Ovary (tissue), 10 donors: ENCODE measurements at regions of chr14 and their contacts with region 1.

Region 1: GRCh38 chr14:92323011-92323915 is at the start of gene SLC24A4:
- DNase-seq: peak in 2 of 5 donors; percentile 9 to 20
- H3K4me3 ChIP-seq: peak within 1 kb of the TSS; percentile 20
- H3K27ac ChIP-seq: no peak within 1 kb of the TSS
- H3K4me1 ChIP-seq: no peaks in the 10 kb centered on the region
- H3K27me3 ChIP-seq: no peaks in the 10 kb centered on the region
- CTCF ChIP-seq: no peak
- EP300 ChIP-seq: no peak
- POLR2A ChIP-seq: no peak
- total RNA-seq, gene SLC24A4: 0.11 to 0.61 (median 0.24) TPM

Region 2: GRCh38 chr14:91693346-91693745 is 629.9 kb before region 1 on chr14:
- intact Hi-C with region 1: no loop called
- DNase-seq: no peak
- H3K4me3 ChIP-seq: no peak overlapping the region
- H3K27ac ChIP-seq: no peak overlapping the region
- H3K4me1 ChIP-seq: no peaks in the 10 kb centered on the region
- H3K27me3 ChIP-seq: no peaks in the 10 kb centered on the region
- CTCF ChIP-seq: no peak
- EP300 ChIP-seq: no peak
- POLR2A ChIP-seq: no peak

Region 3: DNA sequence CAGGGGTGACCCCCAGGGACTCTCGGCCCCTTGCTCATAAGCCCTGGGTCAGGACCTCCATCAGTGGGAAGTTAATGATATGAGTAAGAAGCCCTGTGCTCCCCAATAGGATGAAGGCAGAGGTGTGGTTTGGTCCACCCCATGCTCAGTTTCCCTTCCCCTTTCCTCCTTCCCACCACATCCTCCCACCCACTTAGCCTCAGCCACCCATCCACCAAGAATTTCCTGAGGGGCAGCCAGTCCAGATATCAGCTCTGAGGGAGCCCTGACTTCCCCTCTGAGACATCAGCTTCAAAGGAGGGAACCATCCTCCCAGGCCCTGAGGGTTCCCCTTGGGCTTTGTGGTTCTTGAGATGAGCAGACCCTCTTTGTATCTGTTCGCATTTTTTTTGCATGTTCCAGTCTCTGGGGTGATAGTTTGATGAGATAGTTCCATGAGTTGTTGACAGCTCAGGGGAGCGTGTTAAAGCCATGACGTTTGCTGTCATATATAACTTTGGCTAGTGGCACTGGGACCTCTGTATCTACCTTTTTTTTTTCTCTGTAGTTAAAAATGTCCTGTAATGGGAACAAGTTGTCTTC is 353.9 kb after region 1 on chr14:
- intact Hi-C with region 1: loop called in 1 of 4 experiments (anchors 10 kb)
- DNase-seq: peak in 1 of 5 donors; percentile 6
- H3K4me3 ChIP-seq: no peak overlapping the region
- H3K27ac ChIP-seq: no peak overlapping the region
- H3K4me1 ChIP-seq: no peaks in the 10 kb centered on the region
- H3K27me3 ChIP-seq: no peaks in the 10 kb centered on the region
- CTCF ChIP-seq: no peak
- EP300 ChIP-seq: no peak
- POLR2A ChIP-seq: no peak